ENCODE measurements at regions of chr6 and their contacts with region 1.

Region 1: DNA sequence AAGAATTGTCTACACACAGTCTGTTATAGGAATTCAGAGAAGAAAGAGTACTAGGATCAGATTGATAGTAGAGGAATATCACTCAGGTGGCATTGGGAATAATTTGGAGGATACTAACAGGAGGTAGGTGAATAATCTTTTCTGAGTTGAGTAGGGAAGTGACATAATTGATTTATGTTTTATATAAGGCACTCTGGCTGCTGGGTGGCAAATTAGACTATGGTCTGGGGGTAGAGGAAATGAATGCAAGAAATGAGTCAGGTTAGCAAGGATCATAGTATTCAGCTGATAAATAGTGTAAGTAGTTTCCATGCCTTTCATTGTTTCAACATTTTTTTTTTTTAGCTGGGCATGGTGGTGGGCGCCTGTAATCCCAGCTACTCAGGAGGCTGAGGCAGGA is 113.3 kb downstream of the CDKAL1 start:
- DNase-seq: no peak
- H3K4me3 ChIP-seq: no peak overlapping the region
- CTCF ChIP-seq: no peak

Region 2: GRCh38 chr6:20716865-20717264 is 69.3 kb after region 1 on chr6:
- in situ Hi-C with region 1: loop called (anchors 5 kb)
- DNase-seq: no peak
- H3K4me3 ChIP-seq: no peak overlapping the region
- CTCF ChIP-seq: no peak

Measured in astrocyte of the cerebellum (primary cell).